ENCODE measurements at regions of chr9 and their contacts with region 1.

Region 1: GRCh38 chr9:113657703-113658544 is 194.4 kb downstream of the RGS3 start:
- DNase-seq: peak; percentile 43 to 82 (median 66)
- ATAC-seq: peak; percentile 91
- H3K4me3 ChIP-seq: no peak overlapping the region
- H3K4me3 Mint-ChIP-seq: no peak overlapping the region
- H3K27ac ChIP-seq: no peak overlapping the region
- H3K27ac Mint-ChIP-seq: peak overlapping the region in 1 of 9 donors; percentile 47
- H3K4me1 ChIP-seq: no peaks in the 10 kb centered on the region
- H3K4me1 Mint-ChIP-seq: peaks cover 0 to 9% (median 2%) of the 10 kb centered on the region in 7 donors
- H3K27me3 ChIP-seq: no peaks in the 10 kb centered on the region
- H3K27me3 Mint-ChIP-seq: peaks cover 9 to 23% (median 21%) of the 10 kb centered on the region in 5 donors

Region 2: GRCh38 chr9:113150670-113151611 is 507.0 kb before region 1 on chr9 and contains the start of gene SLC31A2:
- CTCF ChIA-PET with region 1: no interaction called
- POLR2A ChIA-PET with region 1: no interaction called
- intact Hi-C with region 1: loop called in 1 of 2 experiments (anchors 1 kb)
- DNase-seq: peak; percentile 73 to 93 (median 80)
- ATAC-seq: peak; percentile 92
- H3K4me3 ChIP-seq: peak within 1 kb of the TSS; percentile 78
- H3K4me3 Mint-ChIP-seq: peak within 1 kb of the TSS; percentile 58 to 88 (median 84)
- H3K27ac ChIP-seq: peak within 1 kb of the TSS; percentile 73
- H3K27ac Mint-ChIP-seq: peak within 1 kb of the TSS; percentile 38 to 76 (median 68)
- H3K4me1 ChIP-seq: peaks cover 10 to 15% of the 10 kb centered on the region in 2 donors
- H3K4me1 Mint-ChIP-seq: peaks cover 16 to 42% (median 36%) of the 10 kb centered on the region in 7 donors
- H3K27me3 ChIP-seq: no peaks in the 10 kb centered on the region
- H3K27me3 Mint-ChIP-seq: peaks cover 1 to 6% (median 4%) of the 10 kb centered on the region in 5 donors
- total RNA-seq, gene SLC31A2: 5.3 to 39.2 (median 5.4) TPM

Region 3: DNA sequence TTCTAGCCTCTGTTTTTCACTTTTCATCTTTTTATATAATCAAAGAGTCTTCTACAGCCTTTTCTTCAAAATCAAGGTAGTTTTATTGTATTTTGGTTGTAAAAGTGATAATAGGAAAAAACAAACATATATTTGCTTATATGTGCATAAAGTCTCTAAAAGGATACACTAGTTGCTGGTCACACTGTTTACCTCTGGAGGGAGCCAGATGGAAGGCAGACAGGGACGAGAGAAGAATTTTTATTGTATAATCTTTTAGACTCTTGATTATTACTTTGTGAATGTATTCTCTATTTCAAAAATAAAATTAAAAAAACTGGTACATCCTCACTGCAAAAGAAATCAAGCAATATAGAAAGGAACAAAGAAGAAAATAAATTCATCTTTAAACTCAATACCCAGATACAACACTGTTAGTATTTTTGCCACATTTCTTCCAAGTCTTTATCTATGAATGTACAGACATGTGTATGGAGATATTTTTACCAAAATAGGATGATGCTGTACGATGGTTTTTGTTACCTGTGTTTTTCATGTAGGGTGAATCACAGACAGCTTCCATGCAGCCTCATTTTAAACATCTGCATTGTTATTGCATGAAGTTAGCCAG is 348.6 kb before region 1 on chr9:
- CTCF ChIA-PET with region 1: interaction called, 3 read pairs
- POLR2A ChIA-PET with region 1: no interaction called
- intact Hi-C with region 1: loop called (anchors 1 kb)
- DNase-seq: peak in 5 of 9 donors; percentile 19 to 45 (median 33)
- ATAC-seq: peak; percentile 57
- H3K4me3 ChIP-seq: no peak overlapping the region
- H3K4me3 Mint-ChIP-seq: no peak overlapping the region
- H3K27ac ChIP-seq: no peak overlapping the region
- H3K27ac Mint-ChIP-seq: no peak overlapping the region
- H3K4me1 ChIP-seq: no peaks in the 10 kb centered on the region
- H3K4me1 Mint-ChIP-seq: no peaks in the 10 kb centered on the region
- H3K27me3 ChIP-seq: no peaks in the 10 kb centered on the region
- H3K27me3 Mint-ChIP-seq: peaks cover 0 to 7% (median 0%) of the 10 kb centered on the region in 5 donors

Region 4: GRCh38 chr9:113446323-113446740 is 211.6 kb before region 1 on chr9:
- CTCF ChIA-PET with region 1: interaction called, 69 read pairs
- POLR2A ChIA-PET with region 1: interaction called, 3 read pairs
- intact Hi-C with region 1: loop called (anchors 1 to 2 kb)
- DNase-seq: peak in 6 of 9 donors; percentile 20 to 51 (median 42)
- ATAC-seq: no peak
- H3K4me3 ChIP-seq: no peak overlapping the region
- H3K4me3 Mint-ChIP-seq: no peak overlapping the region
- H3K27ac ChIP-seq: no peak overlapping the region
- H3K27ac Mint-ChIP-seq: no peak overlapping the region
- H3K4me1 ChIP-seq: no peaks in the 10 kb centered on the region
- H3K4me1 Mint-ChIP-seq: peaks cover 0 to 3% (median 0%) of the 10 kb centered on the region in 7 donors
- H3K27me3 ChIP-seq: no peaks in the 10 kb centered on the region
- H3K27me3 Mint-ChIP-seq: no peaks in the 10 kb centered on the region

Region 5: GRCh38 chr9:113591001-113591898 is 66.7 kb before region 1 on chr9:
- CTCF ChIA-PET with region 1: interaction called, 12 read pairs
- POLR2A ChIA-PET with region 1: interaction called, 3 read pairs
- intact Hi-C with region 1: loop called (anchors 1 kb)
- DNase-seq: peak in 6 of 9 donors; percentile 30 to 75 (median 38)
- ATAC-seq: peak; percentile 58
- H3K4me3 ChIP-seq: no peak overlapping the region
- H3K4me3 Mint-ChIP-seq: no peak overlapping the region
- H3K27ac ChIP-seq: no peak overlapping the region
- H3K27ac Mint-ChIP-seq: peak overlapping the region in 1 of 9 donors; percentile 45
- H3K4me1 ChIP-seq: peaks cover 5 to 8% of the 10 kb centered on the region in 2 donors
- H3K4me1 Mint-ChIP-seq: peaks cover 20 to 47% (median 23%) of the 10 kb centered on the region in 7 donors
- H3K27me3 ChIP-seq: no peaks in the 10 kb centered on the region
- H3K27me3 Mint-ChIP-seq: no peaks in the 10 kb centered on the region

Region 6: DNA sequence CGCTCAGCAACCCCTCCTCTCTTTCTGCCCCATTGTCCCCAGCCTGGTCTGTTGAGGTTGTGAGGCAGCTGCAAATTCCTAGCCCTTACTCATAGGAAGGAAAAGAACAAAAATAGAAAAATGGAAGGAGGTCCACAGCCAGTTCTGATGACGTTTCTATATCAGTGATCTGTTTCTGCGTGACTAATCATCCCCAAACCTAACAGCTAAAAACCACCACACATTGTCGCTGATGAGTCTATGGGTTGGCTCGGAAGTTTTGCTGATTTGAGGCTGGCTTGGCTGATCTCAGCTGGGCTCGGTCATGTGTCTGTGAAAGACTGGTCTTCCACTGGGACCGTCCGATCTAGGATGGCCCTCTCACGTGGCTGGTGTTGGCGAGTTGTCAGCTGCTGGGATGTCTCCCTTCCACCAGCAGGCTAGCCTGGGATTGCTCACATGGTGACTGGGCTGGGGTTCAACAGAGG is 17.6 kb after region 1 on chr9:
- CTCF ChIA-PET with region 1: no interaction called
- POLR2A ChIA-PET with region 1: no interaction called
- intact Hi-C with region 1: no loop called
- DNase-seq: no peak
- ATAC-seq: peak; percentile 31
- H3K4me3 ChIP-seq: no peak overlapping the region
- H3K4me3 Mint-ChIP-seq: no peak overlapping the region
- H3K27ac ChIP-seq: no peak overlapping the region
- H3K27ac Mint-ChIP-seq: no peak overlapping the region
- H3K4me1 ChIP-seq: no peaks in the 10 kb centered on the region
- H3K4me1 Mint-ChIP-seq: no peaks in the 10 kb centered on the region
- H3K27me3 ChIP-seq: no peaks in the 10 kb centered on the region
- H3K27me3 Mint-ChIP-seq: peaks cover 23 to 52% (median 26%) of the 10 kb centered on the region in 5 donors

Region 7: DNA sequence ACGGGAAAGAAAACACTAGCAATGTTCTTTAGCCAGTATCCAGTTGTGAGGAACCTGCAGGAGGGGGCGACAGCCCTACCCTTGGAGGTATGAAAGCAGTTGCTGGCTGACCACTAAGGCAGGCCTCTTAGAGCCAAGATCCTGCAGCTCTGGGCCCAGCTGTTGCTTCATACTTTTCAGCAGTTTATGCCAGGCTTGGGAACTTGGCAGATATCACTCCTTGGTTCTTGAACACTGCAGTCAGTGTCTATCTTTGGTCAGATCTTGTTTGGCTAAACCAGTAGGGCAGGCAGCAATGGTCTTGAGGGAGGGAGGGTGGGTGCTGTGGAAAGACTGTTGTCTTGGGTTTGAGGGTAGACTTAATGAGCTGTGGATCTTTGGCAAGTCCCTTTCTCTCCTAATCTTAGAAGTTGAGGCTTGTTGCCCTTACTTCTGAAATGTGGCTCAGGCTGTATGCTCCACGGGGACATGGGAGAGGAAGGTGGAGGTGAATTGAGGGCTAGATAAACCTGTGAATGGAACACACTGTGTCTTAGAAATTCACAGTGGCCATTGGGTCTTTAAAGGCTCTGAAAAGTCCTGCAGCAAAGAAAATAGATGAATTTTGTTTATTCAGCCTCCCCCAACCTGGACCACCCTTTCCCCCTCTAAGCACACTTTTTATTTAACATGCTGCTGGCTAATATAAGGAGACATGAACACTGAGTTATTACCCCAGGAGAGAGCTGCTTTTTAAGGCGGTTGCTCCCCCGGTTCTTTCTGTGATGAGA is 255.7 kb after region 1 on chr9:
- CTCF ChIA-PET with region 1: no interaction called
- POLR2A ChIA-PET with region 1: no interaction called
- intact Hi-C with region 1: no loop called
- DNase-seq: no peak
- ATAC-seq: no peak
- H3K4me3 ChIP-seq: no peak overlapping the region
- H3K4me3 Mint-ChIP-seq: no peak overlapping the region
- H3K27ac ChIP-seq: no peak overlapping the region
- H3K27ac Mint-ChIP-seq: no peak overlapping the region
- H3K4me1 ChIP-seq: no peaks in the 10 kb centered on the region
- H3K4me1 Mint-ChIP-seq: peaks cover 0 to 2% (median 0%) of the 10 kb centered on the region in 7 donors
- H3K27me3 ChIP-seq: no peaks in the 10 kb centered on the region
- H3K27me3 Mint-ChIP-seq: peaks cover 0 to 16% (median 4%) of the 10 kb centered on the region in 5 donors